Activated B cell treated with CpG ODN at 0.5 μM for 24 hours (primary cell): ENCODE measurements at regions of chr10 and their contacts with region 1.

Region 1: GRCh38 chr10:98446661-98447221 is at the start of gene HPS1:
- DNase-seq: peak; percentile 93
- ATAC-seq: peak; percentile 92
- H3K4me3 Mint-ChIP-seq: peak within 1 kb of the TSS; percentile 92
- H3K27ac Mint-ChIP-seq: peak within 1 kb of the TSS; percentile 96
- H3K4me1 Mint-ChIP-seq: peaks cover 56% of the 10 kb centered on the region
- H3K27me3 Mint-ChIP-seq: no peaks in the 10 kb centered on the region
- CTCF ChIP-seq: no peak
- total RNA-seq, gene HPS1: 104 and 106 TPM in 2 replicates

Region 2: DNA sequence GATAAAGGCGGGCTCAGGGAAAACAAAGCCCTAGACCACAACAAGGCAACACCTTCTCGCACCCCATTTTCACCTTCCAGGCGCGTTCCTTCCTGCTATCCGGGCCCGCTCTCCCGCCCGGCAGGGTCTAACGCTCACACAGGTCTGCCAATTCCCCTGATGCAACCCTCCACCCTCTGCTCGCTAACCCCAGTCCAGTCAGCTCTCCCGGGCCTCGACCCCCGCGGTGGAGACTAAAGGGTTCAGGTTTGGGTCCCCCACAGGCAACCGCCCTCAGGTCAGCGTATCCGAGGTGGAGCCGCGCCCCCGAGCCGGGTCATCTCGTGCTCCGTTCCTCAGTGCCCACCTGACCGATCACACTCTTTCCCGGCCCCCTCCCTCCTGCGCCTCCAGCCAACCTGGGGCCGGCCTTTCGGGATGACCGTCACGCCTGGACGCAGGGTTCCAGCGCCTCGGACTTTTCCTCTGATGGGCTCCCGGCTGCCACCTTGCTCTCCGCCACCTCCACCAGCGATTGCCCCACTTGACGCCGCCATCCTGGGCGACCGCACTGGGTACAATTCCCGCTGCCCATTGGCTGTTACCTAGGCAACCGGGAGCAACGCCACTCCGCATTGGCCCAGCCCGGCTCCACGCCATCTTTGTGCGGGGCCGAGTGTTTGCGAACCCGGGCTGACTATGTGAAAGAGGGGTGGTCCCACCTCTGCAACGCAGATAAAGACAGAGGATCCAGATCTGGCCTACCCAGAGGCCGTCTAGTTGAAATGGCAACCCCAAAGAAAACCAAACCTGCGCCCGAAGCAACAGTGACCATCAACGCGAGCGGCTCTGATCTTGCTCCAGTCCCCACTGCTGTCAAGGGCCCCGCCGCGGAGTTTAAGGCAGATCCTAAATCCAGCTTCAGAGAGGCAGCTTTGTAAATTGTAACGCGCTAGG is 813.5 kb before region 1 on chr10 and contains the start of gene MORN4:
- CTCF ChIA-PET with region 1: no interaction called
- POLR2A ChIA-PET with region 1: no interaction called
- intact Hi-C with region 1: loop called (anchors 2 kb)
- DNase-seq: peak; percentile 84
- ATAC-seq: peak; percentile 99
- H3K4me3 Mint-ChIP-seq: peak within 1 kb of the TSS; percentile 100
- H3K27ac Mint-ChIP-seq: peak within 1 kb of the TSS; percentile 83
- H3K4me1 Mint-ChIP-seq: peaks cover 16% of the 10 kb centered on the region
- H3K27me3 Mint-ChIP-seq: no peaks in the 10 kb centered on the region
- CTCF ChIP-seq: no peak
- total RNA-seq, gene MORN4: 1.5 and 2.9 TPM in 2 replicates

Region 3: DNA sequence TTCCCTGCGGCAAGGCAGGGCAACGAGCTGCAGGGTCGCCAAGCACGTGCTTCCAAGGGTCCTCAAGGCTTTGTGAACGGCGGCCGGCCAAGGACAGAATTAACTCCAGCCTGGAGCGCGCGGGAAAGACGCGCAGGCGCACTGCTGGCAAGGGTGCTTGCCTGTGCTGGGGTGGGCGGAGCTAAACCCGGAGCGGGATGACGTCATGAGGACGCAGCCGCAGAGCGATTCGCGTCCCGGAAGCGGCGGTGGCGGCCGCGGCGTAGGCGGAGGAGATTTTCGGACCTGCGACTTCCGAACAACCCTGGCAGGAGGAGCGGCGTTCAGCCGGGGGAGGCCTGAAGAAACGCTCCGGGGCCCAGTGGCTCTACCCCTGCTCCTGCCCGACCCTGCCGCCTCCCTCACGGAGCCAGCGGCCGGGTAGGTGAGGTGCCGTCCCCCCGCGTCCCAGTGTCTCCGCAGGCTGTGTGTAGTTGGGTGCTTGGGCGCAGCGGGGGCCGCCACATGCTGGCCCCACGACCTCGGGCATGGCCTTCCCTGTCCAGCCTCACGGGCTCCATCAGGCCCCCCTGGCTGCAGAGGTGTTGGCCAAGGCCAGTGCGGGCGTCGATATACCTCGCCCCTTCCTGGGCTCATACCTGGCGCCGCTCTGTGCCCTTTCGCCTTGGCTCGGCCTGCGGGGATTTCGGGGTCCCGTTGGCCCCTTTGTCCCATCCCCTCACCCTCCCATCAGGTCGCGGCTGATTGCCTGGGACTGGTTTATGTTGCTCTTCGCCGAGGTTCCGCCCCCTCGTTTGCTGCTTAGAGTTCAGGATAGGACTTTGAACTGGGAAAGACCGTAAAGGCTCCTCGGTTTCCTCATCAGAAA is 709.6 kb before region 1 on chr10 and contains the start of gene ZFYVE27:
- CTCF ChIA-PET with region 1: no interaction called
- POLR2A ChIA-PET with region 1: no interaction called
- intact Hi-C with region 1: loop called (anchors 5 kb)
- DNase-seq: peak; percentile 94
- ATAC-seq: peak; percentile 90
- H3K4me3 Mint-ChIP-seq: peak within 1 kb of the TSS; percentile 97
- H3K27ac Mint-ChIP-seq: peak within 1 kb of the TSS; percentile 97
- H3K4me1 Mint-ChIP-seq: peaks cover 47% of the 10 kb centered on the region
- H3K27me3 Mint-ChIP-seq: no peaks in the 10 kb centered on the region
- CTCF ChIP-seq: no peak
- total RNA-seq, gene ZFYVE27: 45.3 and 65.7 TPM in 2 replicates

Region 4: DNA sequence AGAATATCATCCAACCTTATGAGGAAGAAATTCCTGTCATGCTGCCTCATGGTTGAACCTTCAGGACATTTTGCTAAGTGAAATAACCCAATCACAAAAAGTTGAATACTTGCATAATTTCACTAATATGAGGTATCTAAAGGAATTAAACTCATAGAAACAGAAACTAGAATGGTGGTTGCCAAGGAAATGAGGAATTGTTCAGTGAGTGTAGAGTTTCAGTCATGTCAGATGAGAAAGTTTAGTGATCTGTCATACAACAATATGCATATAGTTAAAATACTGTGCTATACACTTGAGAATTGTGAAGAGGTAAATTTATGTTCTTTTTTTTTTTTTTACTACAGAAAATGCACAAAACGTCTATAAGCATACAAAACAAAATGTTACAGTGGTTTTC is 251.6 kb before region 1 on chr10:
- CTCF ChIA-PET with region 1: no interaction called
- POLR2A ChIA-PET with region 1: interaction called, 11 read pairs
- intact Hi-C with region 1: no loop called
- DNase-seq: no peak
- ATAC-seq: peak; percentile 45
- H3K4me3 Mint-ChIP-seq: no peak overlapping the region
- H3K27ac Mint-ChIP-seq: no peak overlapping the region
- H3K4me1 Mint-ChIP-seq: peaks cover 20% of the 10 kb centered on the region
- H3K27me3 Mint-ChIP-seq: no peaks in the 10 kb centered on the region
- CTCF ChIP-seq: no peak

Region 5: DNA sequence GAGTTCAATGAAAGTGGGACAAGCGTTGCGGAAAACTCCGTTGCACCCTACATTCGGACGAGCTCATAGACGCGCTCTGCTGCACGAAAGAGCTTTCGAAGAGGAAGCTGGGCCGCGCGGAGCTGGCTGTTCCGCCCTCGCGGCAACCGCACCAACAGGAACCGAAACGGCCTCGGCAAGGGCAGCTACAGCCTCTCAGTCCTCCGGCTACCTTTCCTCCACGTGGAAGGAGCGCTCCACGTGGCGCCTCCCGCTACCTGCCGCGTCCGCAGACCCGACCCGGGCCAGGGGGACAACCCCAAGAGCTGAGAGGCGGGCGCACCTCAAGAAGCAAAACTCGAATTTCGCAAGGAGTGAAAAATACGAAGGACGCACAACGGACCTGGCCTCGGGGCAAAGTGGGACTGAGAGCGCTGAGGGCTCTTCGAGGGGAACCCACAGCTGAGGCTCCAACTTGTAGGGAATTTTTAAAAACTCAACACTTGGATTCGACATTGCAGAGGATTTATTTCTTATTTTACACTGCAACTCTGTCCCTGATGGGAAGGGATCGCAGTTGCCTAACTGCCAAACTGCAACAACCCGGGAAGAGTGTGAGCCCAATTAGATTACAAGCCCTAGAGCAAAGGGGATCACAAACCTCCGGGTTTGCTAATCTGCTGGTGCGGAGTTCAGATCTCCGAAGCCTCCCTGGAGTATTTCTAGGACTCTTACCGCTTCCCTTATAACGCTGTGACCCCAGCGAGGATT is 787.5 kb after region 1 on chr10:
- CTCF ChIA-PET with region 1: no interaction called
- POLR2A ChIA-PET with region 1: no interaction called
- intact Hi-C with region 1: loop called (anchors 1 kb)
- DNase-seq: peak; percentile 65
- ATAC-seq: peak; percentile 94
- H3K4me3 Mint-ChIP-seq: peak overlapping the region; percentile 52
- H3K27ac Mint-ChIP-seq: peak overlapping the region; percentile 24
- H3K4me1 Mint-ChIP-seq: peaks cover 32% of the 10 kb centered on the region
- H3K27me3 Mint-ChIP-seq: peaks cover 63% of the 10 kb centered on the region
- CTCF ChIP-seq: no peak

Region 6: DNA sequence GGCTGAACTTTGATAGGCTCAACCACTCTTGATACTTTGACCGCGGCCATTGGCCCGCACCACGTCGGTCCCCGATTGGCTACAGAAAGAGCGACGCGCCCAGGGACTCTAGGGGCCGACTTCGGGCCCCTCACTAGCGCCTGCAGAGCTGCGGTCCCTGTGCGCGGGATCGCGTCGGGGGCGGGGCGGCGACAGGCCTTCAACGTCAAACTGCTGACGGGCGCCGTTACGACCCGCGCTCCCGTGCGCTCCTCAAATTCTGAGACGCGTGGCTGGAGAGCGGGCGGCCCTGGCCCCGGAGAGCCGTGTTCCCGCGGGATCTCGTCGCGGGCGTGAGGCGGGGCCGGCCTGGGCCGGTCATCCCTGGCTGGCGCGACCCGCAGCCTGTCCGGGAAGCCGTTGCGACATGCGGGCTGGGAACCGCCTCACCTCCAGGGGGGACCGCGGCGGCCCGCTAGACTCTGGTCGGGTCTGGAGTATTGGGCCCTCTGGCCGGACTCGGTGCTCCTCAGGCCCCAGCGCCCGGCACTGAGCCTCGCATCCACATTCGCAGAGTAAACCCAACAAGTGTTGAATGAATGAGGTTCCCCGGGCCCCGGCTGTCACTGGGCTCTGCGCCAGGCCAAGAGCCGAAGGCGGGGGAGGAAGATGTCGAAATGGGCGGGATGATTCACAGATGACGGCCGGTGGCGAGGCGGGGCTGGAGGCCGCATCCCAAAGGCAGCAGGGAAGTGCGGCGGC is 1174.1 kb after region 1 on chr10:
- CTCF ChIA-PET with region 1: no interaction called
- POLR2A ChIA-PET with region 1: interaction called, 4 read pairs
- intact Hi-C with region 1: loop called (anchors 2 kb)
- DNase-seq: peak; percentile 80
- ATAC-seq: peak; percentile 85
- H3K4me3 Mint-ChIP-seq: peak overlapping the region; percentile 92
- H3K27ac Mint-ChIP-seq: peak overlapping the region; percentile 95
- H3K4me1 Mint-ChIP-seq: peaks cover 49% of the 10 kb centered on the region
- H3K27me3 Mint-ChIP-seq: no peaks in the 10 kb centered on the region
- CTCF ChIP-seq: no peak